ENCODE measurements at regions of chr11 and their contacts with region 1.

Region 1: DNA sequence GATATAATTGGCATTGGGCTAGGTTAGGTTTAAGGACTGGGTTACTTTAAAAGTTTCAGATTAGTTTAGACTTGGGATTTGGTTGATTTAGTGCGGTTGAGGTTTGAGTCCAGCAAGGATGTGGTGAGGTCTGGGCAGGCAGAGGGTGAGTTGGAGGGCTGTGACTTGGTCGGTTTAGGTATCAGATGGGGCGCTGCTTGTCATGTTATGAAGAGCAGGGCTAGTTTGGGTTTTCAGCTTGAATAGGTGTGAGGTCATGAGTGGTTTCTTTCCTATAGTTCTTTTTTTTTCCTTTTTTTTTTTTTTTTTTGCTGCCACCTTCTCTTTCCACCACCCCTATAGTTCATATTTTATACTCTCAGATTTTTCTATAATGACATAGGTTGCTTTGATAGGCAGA is 4.8 kb downstream of the CLCF1 start:
- DNase-seq: peak in 1 of 35 experiments; percentile 42
- ATAC-seq: no peak
- H3K4me3 ChIP-seq: no peak overlapping the region
- H3K4me3 Mint-ChIP-seq: no peak overlapping the region
- H3K27ac ChIP-seq: no peak overlapping the region
- H3K27ac Mint-ChIP-seq: peak overlapping the region; percentile 48 to 76
- H3K4me1 ChIP-seq: peaks cover 6 to 88% of the 10 kb centered on the region in 2 experiments
- H3K4me1 Mint-ChIP-seq: peaks cover 65 to 78% (median 70%) of the 10 kb centered on the region in 3 donors
- H3K27me3 ChIP-seq: peaks cover 0 to 12% of the 10 kb centered on the region in 2 experiments
- H3K27me3 Mint-ChIP-seq: peaks cover 3 to 12% of the 10 kb centered on the region in 2 donors

Region 2: GRCh38 chr11:66727282-66727882 is 641.2 kb before region 1 on chr11:
- CTCF ChIA-PET with region 1: no interaction called
- POLR2A ChIA-PET with region 1: no interaction called
- DNase-seq: peak in 9 of 35 experiments; percentile 6 to 39 (median 11)
- ATAC-seq: peak; percentile 43 to 68 (median 60)
- H3K4me3 ChIP-seq: peak overlapping the region; percentile 37 to 64
- H3K4me3 Mint-ChIP-seq: peak overlapping the region; percentile 49 to 56 (median 51)
- H3K27ac ChIP-seq: no peak overlapping the region
- H3K27ac Mint-ChIP-seq: no peak overlapping the region
- H3K4me1 ChIP-seq: peaks cover 2 to 20% of the 10 kb centered on the region in 2 experiments
- H3K4me1 Mint-ChIP-seq: peaks cover 17 to 18% (median 18%) of the 10 kb centered on the region in 3 donors
- H3K27me3 ChIP-seq: peaks cover 20 to 62% of the 10 kb centered on the region in 2 experiments
- H3K27me3 Mint-ChIP-seq: peaks cover 45 to 66% of the 10 kb centered on the region in 2 donors

Region 3: DNA sequence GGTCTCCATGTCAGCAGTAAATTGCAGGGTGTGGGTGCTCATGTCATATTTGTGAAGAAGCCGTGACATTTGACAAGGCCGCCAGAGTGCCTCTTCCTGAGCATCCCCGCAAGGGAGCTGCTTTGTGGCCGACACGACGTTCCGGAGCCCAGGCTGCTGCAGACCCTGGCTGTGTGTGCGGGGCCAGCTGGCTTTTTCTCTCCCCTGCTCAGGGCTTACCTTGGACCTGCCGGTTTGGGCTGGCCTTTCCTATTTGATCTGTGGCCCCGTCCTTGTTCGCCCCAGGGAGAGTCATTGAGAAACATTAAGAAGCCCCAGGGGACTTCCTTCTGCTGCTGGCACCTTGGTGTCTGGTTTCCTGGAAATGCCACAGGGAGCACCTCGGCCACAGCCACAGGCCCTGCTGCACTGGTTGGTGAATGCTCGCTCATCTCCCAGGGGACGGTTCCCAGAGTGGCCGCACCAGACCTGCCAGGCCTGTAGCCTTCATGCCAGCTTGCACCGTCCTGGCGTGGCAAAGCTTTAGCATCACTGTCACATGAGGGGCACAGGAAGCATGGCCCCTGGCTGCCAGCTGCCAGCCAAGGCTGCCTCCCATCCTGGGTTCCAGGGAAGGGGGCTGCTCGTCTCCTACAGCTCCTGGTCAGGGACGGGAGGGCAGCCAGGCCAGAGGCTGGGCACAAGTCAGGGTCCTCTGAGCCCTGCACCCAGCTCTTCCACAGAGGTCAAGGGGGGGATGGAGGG is 96.9 kb before region 1 on chr11:
- CTCF ChIA-PET with region 1: no interaction called
- POLR2A ChIA-PET with region 1: interaction called in 1 of 2 experiments, 16 read pairs
- DNase-seq: peak in 28 of 35 experiments; percentile 27 to 79 (median 50)
- ATAC-seq: peak; percentile 34 to 56 (median 40)
- H3K4me3 ChIP-seq: peak overlapping the region; percentile 67 to 88
- H3K4me3 Mint-ChIP-seq: peak overlapping the region; percentile 96 to 99 (median 98)
- H3K27ac ChIP-seq: peak overlapping the region; percentile 86
- H3K27ac Mint-ChIP-seq: peak overlapping the region; percentile 97 to 98
- H3K4me1 ChIP-seq: peaks cover 60 to 95% of the 10 kb centered on the region in 2 experiments
- H3K4me1 Mint-ChIP-seq: peaks cover 72 to 95% (median 80%) of the 10 kb centered on the region in 3 donors
- H3K27me3 ChIP-seq: no peaks in the 10 kb centered on the region
- H3K27me3 Mint-ChIP-seq: no peaks in the 10 kb centered on the region

Region 4: DNA sequence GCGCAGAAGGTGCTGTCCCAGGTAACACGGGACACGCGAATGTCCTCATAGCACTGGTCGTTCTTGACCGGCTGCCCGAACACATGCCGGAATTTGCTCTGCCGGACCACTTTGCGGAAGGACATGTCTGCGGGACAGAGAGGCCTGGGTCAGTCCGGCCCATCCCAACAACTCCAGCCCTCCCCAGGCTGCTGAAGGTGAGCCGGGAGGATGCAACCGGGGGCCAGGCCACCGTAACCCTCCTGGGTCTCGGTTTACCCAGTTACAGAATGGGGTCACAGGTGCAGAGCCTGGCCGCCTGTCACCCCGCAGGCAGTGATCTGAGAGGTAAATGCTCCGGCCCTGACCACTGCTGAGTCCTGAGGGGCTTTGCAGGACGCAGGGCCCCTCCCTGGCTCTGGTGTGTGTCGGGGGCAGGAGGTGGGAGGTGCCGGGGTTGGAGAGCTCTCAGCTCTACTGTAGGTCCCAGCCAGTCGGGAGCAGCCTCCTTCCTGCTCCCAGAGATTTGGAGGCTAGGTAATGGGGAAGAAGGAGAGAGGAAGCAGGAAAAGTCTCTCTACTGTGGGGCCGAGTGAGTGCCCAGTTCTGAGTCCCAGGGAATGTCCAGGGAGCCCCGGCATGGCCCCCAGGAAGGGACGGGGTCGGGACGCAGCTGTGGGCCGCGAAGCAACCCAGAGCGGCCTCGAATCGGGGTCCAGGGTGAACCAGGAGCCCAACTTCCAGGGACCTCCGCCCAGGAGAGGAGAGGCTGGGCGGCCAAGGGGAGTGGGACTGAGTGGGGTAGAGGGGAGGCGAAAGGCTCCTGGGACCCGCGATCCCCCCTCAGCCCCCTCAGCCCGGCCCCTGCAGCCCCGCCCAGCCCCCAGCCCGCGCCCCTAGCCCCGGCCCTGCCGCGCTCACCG is 74.1 kb after region 1 on chr11:
- CTCF ChIA-PET with region 1: no interaction called
- POLR2A ChIA-PET with region 1: no interaction called
- DNase-seq: peak in 4 of 35 experiments; percentile 10 to 23 (median 18)
- ATAC-seq: no peak
- H3K4me3 ChIP-seq: no peak overlapping the region
- H3K4me3 Mint-ChIP-seq: peak overlapping the region; percentile 52 to 99 (median 69)
- H3K27ac ChIP-seq: peak overlapping the region; percentile 35
- H3K27ac Mint-ChIP-seq: peak overlapping the region; percentile 87 to 92
- H3K4me1 ChIP-seq: peaks cover 35 to 96% of the 10 kb centered on the region in 2 experiments
- H3K4me1 Mint-ChIP-seq: peaks cover 83 to 88% (median 86%) of the 10 kb centered on the region in 3 donors
- H3K27me3 ChIP-seq: no peaks in the 10 kb centered on the region
- H3K27me3 Mint-ChIP-seq: no peaks in the 10 kb centered on the region

Region 5: DNA sequence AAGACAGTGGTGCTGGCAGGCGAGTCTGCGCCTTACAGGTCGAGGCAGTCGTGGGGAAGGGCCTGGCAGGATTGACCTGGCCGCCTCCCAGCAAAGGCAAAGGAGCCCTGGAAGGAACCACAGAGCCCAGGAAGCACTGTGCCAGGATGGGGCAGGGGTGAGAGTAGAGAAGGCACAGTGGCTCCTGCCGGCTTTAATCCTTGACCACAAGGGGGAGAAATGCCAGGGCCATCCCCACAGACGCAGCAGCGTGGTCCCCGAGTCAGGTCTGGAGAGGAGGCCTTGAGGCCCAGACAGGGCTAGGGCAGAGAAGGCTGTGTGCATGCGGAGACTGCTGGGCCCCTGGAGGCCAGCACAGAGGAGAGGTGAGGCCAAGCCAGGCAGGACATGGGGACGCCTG is 652.0 kb after region 1 on chr11:
- CTCF ChIA-PET with region 1: no interaction called
- POLR2A ChIA-PET with region 1: no interaction called
- DNase-seq: no peak
- ATAC-seq: no peak
- H3K4me3 ChIP-seq: no peak overlapping the region
- H3K4me3 Mint-ChIP-seq: no peak overlapping the region
- H3K27ac ChIP-seq: no peak overlapping the region
- H3K27ac Mint-ChIP-seq: no peak overlapping the region
- H3K4me1 ChIP-seq: no peaks in the 10 kb centered on the region
- H3K4me1 Mint-ChIP-seq: no peaks in the 10 kb centered on the region
- H3K27me3 ChIP-seq: peaks cover 0 to 8% of the 10 kb centered on the region in 2 experiments
- H3K27me3 Mint-ChIP-seq: no peaks in the 10 kb centered on the region